Colonic mucosa (tissue), 4 donors: ENCODE measurements at regions of chr16 and their contacts with region 1.

Region 1: DNA sequence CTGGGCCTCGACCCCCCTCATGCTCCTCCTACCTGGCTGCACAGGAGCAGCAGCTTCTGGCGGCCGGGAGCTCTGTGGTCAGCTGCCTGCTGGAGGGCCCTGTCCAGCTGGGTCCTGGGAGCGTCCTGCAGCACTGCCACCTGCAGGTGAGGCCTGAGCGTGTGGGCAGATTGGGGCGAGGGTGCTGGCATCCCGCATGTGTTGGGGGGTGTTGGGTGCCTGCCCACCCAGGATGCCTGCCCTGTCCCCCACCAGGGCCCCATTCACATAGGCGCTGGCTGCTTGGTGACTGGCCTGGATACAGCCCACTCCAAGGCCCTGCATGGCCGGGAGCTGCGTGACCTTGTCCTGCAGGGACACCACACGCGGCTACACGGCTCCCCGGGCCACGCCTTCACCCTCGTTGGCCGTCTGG is 16.5 kb downstream of the FCSK start:
- DNase-seq: no peak
- H3K4me3 ChIP-seq: no peak overlapping the region
- H3K27ac ChIP-seq: no peak overlapping the region
- H3K4me1 ChIP-seq: no peaks in the 10 kb centered on the region
- H3K27me3 ChIP-seq: no peaks in the 10 kb centered on the region
- CTCF ChIP-seq: peak; percentile 25

Region 2: GRCh38 chr16:70372921-70373728 is 97.8 kb before region 1 on chr16:
- intact Hi-C with region 1: loop called (anchors 5 kb)
- DNase-seq: no peak
- H3K4me3 ChIP-seq: no peak overlapping the region
- H3K27ac ChIP-seq: no peak overlapping the region
- H3K4me1 ChIP-seq: no peaks in the 10 kb centered on the region
- H3K27me3 ChIP-seq: no peaks in the 10 kb centered on the region
- CTCF ChIP-seq: no peak

Region 3: DNA sequence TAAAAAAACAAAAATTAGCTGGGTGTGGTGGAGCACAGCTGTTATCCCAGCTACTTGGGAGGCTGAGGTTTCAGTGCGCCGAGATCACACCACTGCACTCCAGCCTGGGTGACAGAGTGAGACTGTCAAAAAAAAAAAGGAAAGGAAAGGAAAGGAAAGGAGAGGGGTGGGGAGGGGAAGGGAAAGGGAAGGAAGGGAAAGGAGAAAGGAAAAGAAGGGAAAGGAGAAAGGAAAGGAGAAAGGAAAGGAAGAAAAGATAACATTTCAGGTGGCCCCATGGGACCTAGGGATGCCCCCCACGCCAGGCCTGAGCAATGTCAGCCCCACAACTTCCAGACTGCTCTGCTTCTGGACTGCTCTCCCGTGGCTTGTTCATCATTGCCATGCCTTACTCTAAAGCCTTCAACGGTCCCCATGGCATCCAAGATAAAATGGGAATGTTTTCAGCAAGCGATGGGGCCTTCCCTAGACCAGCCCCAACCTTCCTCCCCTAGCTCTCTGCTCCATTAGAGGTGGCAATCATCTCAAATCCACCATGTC is 87.4 kb before region 1 on chr16:
- intact Hi-C with region 1: no loop called
- DNase-seq: no peak
- H3K4me3 ChIP-seq: no peak overlapping the region
- H3K27ac ChIP-seq: no peak overlapping the region
- H3K4me1 ChIP-seq: peaks cover 7% of the 10 kb centered on the region
- H3K27me3 ChIP-seq: no peaks in the 10 kb centered on the region
- CTCF ChIP-seq: no peak

Region 4: DNA sequence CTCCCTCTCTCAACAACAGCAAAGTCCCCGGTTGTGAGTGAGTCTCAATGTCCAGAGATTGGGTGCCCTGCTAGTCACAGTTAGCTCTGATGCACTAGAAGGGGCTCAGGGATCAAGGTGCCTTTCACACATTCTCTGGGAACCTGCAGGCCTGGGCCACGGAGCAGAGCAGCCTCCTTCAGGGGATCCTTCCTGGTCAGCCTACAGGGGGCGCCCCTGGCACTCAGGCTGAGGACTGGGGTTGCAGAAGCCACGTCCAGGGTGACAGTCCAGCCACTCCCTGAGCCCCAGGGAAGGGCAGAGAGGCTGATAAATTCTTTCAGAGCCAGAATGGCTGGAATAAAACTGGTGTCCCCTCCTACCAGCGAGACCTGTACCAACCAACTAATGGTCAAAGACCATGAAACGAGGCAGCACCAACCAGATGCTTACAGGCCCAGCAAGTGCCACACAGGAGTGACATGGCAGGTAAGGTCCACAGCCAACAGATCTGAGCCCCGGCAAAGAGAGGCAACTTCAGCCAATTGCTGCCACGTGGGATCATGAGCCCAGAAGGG is 75.5 kb before region 1 on chr16:
- intact Hi-C with region 1: loop called (anchors 5 kb)
- DNase-seq: peak; percentile 90
- H3K4me3 ChIP-seq: no peak overlapping the region
- H3K27ac ChIP-seq: no peak overlapping the region
- H3K4me1 ChIP-seq: peaks cover 3% of the 10 kb centered on the region
- H3K27me3 ChIP-seq: no peaks in the 10 kb centered on the region
- CTCF ChIP-seq: peak; percentile 76